ENCODE measurements at regions of chr1 and their contacts with region 1.

Region 1: DNA sequence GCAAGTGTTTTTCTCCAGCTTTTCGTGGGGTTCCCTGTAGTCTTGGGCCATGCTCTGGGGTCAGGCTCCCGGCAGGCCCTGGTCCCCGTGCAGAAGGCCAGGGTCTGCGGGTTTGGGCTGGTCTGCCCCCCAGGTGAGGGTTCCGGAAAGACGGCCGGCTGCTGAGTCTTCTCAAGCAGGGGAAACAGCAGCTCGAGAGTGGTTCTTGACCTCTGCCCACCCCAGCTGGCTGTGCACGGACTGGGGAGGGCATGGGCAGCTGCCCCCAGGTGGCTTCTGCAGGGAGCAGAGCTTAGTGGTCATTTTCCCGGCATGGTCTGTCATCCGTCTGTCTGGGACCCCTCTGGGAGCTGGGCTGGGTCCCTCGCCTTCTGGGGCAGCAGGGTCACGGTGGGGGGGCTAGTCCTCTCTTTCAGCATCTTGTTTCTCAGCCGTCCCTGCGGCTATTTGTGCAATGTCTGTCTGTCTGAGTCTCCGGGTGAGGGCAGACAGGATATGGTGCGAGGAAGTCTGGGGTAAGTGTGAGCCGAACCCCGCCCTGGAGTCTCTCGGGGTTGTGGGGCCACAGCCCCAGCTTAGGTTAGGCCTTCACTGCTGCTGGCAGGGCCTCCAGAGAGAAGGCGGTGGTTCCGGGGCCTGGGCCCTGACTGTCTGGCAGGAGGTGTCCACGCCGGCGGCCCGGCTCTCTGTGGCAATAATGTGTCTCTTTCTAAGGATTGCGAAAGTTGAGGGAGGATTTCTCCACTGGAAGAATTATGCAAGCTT is 6.1 kb downstream of the SKI start:
- DNase-seq: peak; percentile 82 to 97
- H3K4me3 ChIP-seq: peak overlapping the region; percentile 78 to 85
- H3K27ac ChIP-seq: peak overlapping the region; percentile 85 to 93
- H3K4me1 ChIP-seq: peaks cover 55 to 66% of the 10 kb centered on the region in 2 donors
- H3K27me3 ChIP-seq: no peaks in the 10 kb centered on the region
- CTCF ChIP-seq: no peak

Region 2: DNA sequence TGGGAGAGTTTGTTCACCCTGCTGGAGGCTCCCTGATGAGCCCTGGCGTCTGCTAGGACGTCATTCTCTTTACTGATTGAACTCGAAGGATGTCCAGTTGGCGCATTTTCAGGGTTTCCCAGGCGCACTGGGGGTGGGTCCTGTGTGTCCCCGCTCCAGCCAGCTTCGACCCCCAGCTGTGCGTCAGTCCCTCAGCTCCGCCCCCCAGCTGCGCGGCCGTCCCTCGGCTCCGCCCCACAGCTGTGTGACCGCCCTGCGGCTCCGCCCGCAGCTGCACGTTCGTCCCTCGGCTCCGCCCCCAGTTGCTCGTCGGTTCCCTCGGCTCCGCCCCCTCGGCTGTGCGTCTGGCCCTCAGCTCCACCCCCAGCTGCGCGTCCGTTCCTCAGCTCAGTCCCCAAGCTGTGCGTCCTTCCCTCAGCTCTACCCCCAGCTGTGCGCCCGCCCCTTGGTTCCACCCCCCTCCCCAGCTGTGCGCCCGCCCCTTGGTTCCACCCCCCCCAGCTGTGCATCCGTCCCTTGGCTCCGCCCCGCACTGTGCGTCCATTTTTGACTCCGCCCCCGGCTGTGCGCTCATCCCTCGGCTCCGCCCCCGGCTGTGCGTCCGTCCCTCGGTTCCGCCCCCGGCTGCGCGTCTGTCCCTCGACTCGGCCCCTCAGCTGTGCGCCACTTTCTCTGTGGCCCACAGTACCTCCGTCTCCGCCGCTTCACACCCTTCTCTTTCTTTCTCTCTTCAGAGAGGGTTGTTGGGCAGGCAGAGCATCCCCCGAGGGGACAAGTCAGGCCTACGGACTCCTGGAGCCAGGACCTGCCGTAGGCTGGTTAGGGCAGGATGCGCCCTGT is 100.9 kb before region 1 on chr1:
- intact Hi-C with region 1: no loop called
- DNase-seq: peak; percentile 87 to 97
- H3K4me3 ChIP-seq: peak overlapping the region; percentile 33 to 64
- H3K27ac ChIP-seq: peak overlapping the region; percentile 77 to 87
- H3K4me1 ChIP-seq: peaks cover 0 to 12% of the 10 kb centered on the region in 2 donors
- H3K27me3 ChIP-seq: no peaks in the 10 kb centered on the region
- CTCF ChIP-seq: no peak

Region 3: DNA sequence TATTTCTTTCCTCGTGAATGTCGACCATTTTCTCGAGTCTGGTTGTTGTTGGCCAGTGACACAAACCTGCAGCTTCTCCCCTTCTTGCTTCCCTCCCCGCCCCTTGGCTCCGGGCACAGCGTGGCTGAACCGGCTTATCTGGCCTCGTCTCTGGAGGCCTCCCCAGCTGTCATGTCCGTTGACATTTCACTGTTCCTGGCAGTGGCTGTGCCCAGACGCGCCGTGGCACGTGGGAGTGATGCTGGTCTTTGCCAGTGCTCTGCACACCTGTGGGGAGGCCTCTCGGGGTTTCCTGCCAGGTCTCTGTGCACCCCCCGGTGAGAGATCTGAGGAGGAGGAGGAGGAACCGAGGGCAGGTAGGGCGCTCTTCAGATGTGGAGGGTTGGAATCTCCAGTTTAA is 17.6 kb after region 1 on chr1:
- intact Hi-C with region 1: loop called (anchors 2 kb)
- DNase-seq: no peak
- H3K4me3 ChIP-seq: peak overlapping the region in 1 of 2 donors; percentile 29
- H3K27ac ChIP-seq: peak overlapping the region; percentile 34 to 89
- H3K4me1 ChIP-seq: peaks cover 44 to 85% of the 10 kb centered on the region in 2 donors
- H3K27me3 ChIP-seq: no peaks in the 10 kb centered on the region
- CTCF ChIP-seq: no peak

Region 4: GRCh38 chr1:2279210-2279639 is 45.0 kb after region 1 on chr1:
- intact Hi-C with region 1: loop called (anchors 5 kb)
- DNase-seq: peak in 1 of 2 donors; percentile 79
- H3K4me3 ChIP-seq: peak overlapping the region in 1 of 2 donors; percentile 43
- H3K27ac ChIP-seq: peak overlapping the region; percentile 72 to 86
- H3K4me1 ChIP-seq: peaks cover 31 to 75% of the 10 kb centered on the region in 2 donors
- H3K27me3 ChIP-seq: no peaks in the 10 kb centered on the region
- CTCF ChIP-seq: no peak

Region 5: DNA sequence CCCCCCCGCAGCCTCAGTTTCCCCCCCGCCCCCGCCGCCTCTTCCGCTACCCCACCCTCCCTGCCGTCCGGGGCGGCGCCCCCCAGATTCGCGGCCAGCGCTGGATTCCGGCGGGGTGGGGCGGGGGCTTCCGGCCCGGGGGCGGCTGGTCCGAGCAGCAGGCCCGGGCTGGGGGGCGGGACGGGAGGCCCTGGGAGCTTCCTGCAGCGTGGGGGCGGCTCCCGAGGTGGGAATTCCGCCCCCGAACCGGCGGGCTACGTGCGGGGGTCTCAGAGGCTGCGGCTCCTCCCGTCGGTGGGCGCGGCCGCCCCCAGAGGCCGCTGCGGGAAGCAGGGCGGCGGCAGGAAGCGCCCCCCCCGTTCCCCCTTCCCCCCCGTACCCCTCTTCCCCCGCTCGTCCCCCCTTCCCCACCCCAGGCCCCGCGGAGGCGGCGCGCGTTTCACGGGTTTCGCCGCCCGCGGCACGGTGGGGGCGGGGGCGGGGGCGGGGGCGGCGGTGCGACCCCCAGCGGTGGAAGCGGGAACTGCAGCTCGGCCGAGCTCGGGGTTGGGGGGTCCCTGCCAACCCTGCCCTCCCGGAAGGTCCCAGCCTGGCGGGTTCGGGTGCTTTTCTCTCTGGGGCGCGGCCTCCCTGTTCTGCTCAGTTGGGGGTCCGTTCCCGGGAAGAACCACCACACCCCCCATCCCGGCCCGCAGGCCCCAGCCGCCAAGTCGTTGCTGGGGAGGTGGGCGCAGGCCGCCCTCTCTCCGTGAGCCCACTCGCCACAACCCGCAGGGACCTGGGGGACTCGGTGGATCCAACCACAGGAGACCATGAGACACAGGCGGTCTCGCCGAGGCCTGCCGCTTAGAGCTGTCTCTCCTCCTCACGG is 80.9 kb after region 1 on chr1:
- intact Hi-C with region 1: loop called (anchors 2 kb)
- DNase-seq: no peak
- H3K4me3 ChIP-seq: peak overlapping the region; percentile 80 to 81
- H3K27ac ChIP-seq: peak overlapping the region; percentile 92 to 95
- H3K4me1 ChIP-seq: peaks cover 28 to 73% of the 10 kb centered on the region in 2 donors
- H3K27me3 ChIP-seq: no peaks in the 10 kb centered on the region
- CTCF ChIP-seq: peak; percentile 81 to 95 (median 91)

Region 6: DNA sequence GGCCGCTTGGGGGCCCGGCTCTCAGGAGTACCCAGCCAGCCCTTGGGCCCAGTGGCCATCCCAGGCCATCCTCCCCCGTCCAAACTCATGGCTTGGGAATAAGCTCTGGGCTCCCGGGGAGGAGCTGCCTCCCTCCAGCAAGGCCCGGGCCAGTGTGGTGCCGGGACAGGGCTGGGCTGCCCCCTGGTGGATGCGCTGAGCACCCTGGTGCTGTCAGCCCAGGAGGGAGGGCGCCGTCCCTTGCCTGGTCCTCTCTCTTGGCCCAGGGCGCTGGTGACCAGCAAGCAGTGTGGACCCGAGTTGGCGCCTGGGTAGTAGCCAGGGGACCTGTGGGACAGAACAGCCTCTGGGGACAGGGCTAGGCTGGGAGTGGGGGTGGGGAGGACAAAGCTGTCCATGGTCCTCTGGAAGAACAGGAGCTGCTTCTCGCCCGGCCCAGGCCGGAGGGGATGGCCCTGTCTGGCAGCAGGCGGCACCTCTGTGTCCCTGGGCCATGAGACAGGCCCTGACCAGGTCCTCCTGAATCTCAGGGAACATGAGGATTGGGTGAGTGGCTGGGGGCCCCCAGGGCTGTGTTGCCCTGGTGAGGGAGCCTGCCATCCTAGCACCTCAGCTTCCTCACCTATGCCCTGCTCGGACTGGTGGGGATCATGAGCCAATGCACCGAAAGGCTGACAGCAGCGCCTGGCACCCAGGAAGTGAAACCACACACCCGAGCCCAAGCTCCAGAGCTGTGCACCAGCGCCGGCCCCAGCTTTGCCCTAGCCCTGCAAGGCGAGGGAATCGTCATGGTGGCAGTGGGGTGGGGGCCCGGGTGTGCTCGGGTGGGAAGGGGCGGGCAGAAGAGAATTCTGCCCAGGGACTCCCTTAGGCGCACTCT is 147.8 kb after region 1 on chr1:
- intact Hi-C with region 1: loop called (anchors 5 kb)
- DNase-seq: peak; percentile 29 to 91
- H3K4me3 ChIP-seq: no peak overlapping the region
- H3K27ac ChIP-seq: peak overlapping the region; percentile 32 to 51
- H3K4me1 ChIP-seq: peaks cover 10 to 11% of the 10 kb centered on the region in 2 donors
- H3K27me3 ChIP-seq: no peaks in the 10 kb centered on the region
- CTCF ChIP-seq: peak; percentile 96 to 99 (median 99)